Posterior vena cava (tissue), 2 donors: ENCODE measurements at regions of chr2 and their contacts with region 1.

Region 1: GRCh38 chr2:239196474-239197021 is 204.3 kb downstream of the HDAC4 start:
- DNase-seq: peak; percentile 70

Region 2: GRCh38 chr2:239162976-239163687 is 33.4 kb before region 1 on chr2:
- intact Hi-C with region 1: loop called in 1 of 2 experiments (anchors 1 kb)
- DNase-seq: peak; percentile 35